ENCODE measurements at regions of chr3 and their contacts with region 1.

Region 1: GRCh38 chr3:8987645-8988383 is 24.5 kb upstream of the RAD18 start:
- DNase-seq: peak; percentile 40 to 54 (median 47)
- H3K4me3 ChIP-seq: peak overlapping the region in 1 of 3 experiments; percentile 15
- H3K4me3 Mint-ChIP-seq: peak overlapping the region; percentile 65 to 79
- H3K27ac ChIP-seq: no peak overlapping the region
- H3K27ac Mint-ChIP-seq: peak overlapping the region in 1 of 7 donors; percentile 35
- H3K4me1 ChIP-seq: peaks cover 5 to 6% of the 10 kb centered on the region in 2 donors
- H3K4me1 Mint-ChIP-seq: peaks cover 5% of the 10 kb centered on the region
- H3K27me3 ChIP-seq: no peaks in the 10 kb centered on the region
- H3K27me3 Mint-ChIP-seq: peaks cover 2 to 6% (median 2%) of the 10 kb centered on the region in 3 donors
- CTCF ChIP-seq: peak; percentile 90

Region 2: DNA sequence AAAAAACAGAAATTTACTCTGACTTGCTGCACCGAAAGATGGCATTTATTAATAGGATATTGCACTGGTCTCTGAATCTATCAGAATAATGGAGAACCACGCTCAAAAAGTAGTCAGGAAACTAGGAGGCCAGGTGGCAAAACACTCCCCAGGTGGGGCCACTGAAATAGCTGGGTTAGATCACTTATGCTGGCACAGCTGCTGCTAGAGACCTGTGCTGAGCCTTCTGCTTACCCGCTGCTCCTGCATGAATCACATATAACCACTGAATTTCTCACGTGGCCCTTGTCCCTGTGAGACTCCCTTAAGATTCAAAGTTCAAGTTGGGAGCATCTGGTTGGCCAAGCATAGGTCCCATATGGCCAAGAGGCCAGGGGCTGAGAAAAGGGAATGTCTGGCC is 152.4 kb before region 1 on chr3:
- intact Hi-C with region 1: no loop called
- DNase-seq: no peak
- H3K4me3 ChIP-seq: no peak overlapping the region
- H3K4me3 Mint-ChIP-seq: no peak overlapping the region
- H3K27ac ChIP-seq: no peak overlapping the region
- H3K27ac Mint-ChIP-seq: no peak overlapping the region
- H3K4me1 ChIP-seq: no peaks in the 10 kb centered on the region
- H3K4me1 Mint-ChIP-seq: no peaks in the 10 kb centered on the region
- H3K27me3 ChIP-seq: no peaks in the 10 kb centered on the region
- H3K27me3 Mint-ChIP-seq: peaks cover 2 to 3% (median 2%) of the 10 kb centered on the region in 3 donors
- CTCF ChIP-seq: no peak

Region 3: DNA sequence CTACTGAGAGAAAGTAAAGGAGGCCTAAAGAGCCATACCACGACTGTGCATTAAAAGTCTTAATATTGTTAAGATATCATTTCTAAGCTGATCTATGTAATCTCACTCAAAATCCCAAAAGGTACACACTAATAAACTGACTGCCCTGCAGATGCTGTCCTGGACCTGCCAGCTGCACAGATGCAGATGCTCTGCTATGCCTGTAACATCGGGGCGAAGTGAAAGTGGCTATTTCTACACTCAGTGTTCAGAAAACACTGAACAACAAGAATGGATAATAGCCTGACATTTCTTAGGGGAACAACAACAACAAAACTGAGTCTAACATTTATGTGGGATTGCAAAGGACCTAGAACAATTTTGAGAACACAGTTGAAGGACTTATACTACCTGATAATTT is 56.5 kb before region 1 on chr3:
- intact Hi-C with region 1: no loop called
- DNase-seq: no peak
- H3K4me3 ChIP-seq: no peak overlapping the region
- H3K4me3 Mint-ChIP-seq: no peak overlapping the region
- H3K27ac ChIP-seq: no peak overlapping the region
- H3K27ac Mint-ChIP-seq: no peak overlapping the region
- H3K4me1 ChIP-seq: no peaks in the 10 kb centered on the region
- H3K4me1 Mint-ChIP-seq: no peaks in the 10 kb centered on the region
- H3K27me3 ChIP-seq: no peaks in the 10 kb centered on the region
- H3K27me3 Mint-ChIP-seq: no peaks in the 10 kb centered on the region
- CTCF ChIP-seq: no peak

Region 4: DNA sequence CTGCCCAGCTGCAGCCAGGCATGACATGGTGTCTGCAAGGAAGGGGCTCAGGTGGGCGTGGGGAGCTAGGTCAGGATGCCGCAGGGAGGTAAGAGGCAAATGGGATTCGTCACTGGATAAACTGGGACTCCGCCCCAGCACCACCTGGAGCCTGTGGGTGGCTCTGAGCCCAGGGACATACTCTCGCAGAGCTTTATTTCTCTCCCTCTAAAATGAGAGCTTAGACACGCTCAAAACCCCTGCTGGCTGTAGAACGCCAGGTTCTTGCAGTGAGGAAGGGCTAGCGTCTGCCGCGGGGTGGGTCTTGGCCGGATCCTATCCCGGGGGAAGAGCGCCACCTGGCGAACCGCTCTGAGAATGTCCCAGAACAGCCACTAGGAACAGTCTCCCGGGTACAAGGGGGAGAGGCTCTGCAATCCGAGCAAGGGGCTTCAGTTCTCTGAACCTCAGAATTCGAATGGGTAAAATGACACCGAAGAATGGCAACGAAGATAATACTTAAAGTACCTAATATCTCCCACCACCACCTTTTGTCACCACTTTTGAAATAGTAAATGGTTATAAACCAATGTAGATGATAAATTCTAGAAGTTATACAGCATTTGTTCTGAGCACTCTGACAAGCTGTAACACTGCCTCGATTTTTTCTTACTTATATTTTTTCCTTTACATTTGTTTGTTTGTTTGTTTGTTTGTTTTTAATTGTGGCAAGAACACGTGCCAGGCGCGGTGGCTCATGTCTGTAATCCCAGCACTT is 314.8 kb after region 1 on chr3:
- intact Hi-C with region 1: loop called in 1 of 2 experiments (anchors 1 kb)
- DNase-seq: peak; percentile 59 to 70 (median 59)
- H3K4me3 ChIP-seq: peak overlapping the region in 1 of 3 experiments; percentile 12
- H3K4me3 Mint-ChIP-seq: peak overlapping the region in 1 of 2 donors; percentile 71
- H3K27ac ChIP-seq: no peak overlapping the region
- H3K27ac Mint-ChIP-seq: no peak overlapping the region
- H3K4me1 ChIP-seq: peaks cover 0 to 5% of the 10 kb centered on the region in 2 donors
- H3K4me1 Mint-ChIP-seq: peaks cover 5% of the 10 kb centered on the region
- H3K27me3 ChIP-seq: no peaks in the 10 kb centered on the region
- H3K27me3 Mint-ChIP-seq: peaks cover 4 to 8% (median 5%) of the 10 kb centered on the region in 3 donors
- CTCF ChIP-seq: peak; percentile 94